Aorta (tissue), 5 donors: ENCODE measurements at regions of chr7 and their contacts with region 1.

Region 1: DNA sequence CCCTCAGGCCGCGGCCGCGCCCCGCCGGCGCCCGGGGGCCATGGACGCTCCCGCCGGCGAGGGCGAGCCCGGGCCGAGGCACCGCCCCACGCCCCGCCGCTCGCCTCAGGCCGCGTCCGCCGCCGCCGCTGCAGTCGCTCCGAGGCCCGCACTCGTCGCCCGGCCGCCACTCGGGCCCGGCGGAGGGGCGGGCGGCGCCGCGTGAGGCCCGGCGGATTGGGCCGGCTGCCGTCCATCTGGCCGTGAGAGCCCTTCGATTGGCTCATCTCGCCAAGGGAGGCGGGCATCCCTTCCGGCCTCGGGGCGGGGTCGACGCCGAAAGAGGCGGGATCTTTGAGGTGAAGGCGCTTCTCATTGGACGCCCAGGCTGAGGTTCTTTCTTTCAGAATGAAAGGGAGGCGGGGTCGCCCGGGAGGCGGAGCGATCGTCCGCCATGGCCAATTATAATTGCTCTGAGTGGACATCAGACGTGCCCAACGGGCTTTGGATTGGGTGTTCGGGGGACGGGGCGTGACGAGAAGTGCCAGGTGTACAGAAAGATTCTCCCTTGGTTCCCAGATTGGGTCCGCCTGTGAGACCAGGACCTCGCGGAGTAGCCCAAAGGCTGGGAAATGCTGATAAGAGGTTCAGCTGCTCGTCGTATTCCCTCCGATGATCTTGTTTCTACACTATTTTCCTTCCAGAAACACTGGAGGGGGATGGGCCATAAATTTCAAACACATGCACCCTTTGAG is at the start of gene GNA12:
- DNase-seq: peak; percentile 98 to 99
- ATAC-seq: peak; percentile 99
- H3K4me3 ChIP-seq: peak within 1 kb of the TSS; percentile 72 to 87
- H3K27ac ChIP-seq: no peak within 1 kb of the TSS
- H3K4me1 ChIP-seq: peaks cover 0 to 1% of the 10 kb centered on the region in 2 donors
- H3K27me3 ChIP-seq: no peaks in the 10 kb centered on the region
- total RNA-seq, gene GNA12: 53.0 to 56.6 TPM

Region 2: DNA sequence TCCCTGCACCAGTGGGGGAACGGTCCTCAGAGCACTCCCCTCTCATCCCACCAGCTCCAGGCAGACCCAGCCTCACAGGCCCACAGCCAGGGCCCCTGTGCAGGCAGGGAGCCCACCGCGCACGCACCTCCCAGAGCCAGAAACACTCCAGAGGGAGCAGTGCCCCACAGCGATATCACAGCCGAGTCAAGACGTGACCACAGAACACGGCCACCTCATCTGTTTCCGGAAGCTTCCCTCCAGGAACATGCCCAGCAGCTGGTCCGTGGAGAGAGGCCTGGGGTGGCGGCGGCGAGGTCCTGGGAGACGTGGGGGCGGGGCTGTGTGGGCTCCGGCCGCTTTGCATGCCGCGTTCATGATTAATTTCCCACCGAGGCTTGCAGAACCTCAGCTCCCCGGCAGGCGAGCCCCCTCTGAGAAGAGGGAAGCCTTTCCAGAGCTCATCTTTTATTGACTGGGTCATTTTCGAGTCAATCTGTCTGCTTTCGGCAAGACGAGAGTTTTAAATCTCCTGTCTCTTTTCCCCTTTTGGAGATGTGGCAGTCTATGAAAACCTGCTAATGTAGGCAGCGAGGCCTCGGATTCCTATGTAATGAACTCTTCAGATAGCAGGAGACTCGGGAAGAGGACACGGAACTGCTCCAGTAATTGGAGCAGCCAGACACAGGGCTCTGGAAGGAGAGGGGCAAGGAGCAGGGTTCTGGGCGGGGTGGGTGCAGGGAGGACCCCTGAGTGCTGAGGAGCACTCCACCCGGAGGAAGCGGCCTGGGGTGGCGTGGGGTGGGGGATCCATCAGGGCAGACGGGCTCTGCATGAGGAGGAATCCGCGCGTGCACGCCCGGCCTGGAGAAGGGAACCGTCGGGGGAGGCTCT is 931.5 kb before region 1 on chr7:
- intact Hi-C with region 1: no loop called
- DNase-seq: peak; percentile 69 to 88
- ATAC-seq: no peak
- H3K4me3 ChIP-seq: no peak overlapping the region
- H3K27ac ChIP-seq: no peak overlapping the region
- H3K4me1 ChIP-seq: no peaks in the 10 kb centered on the region
- H3K27me3 ChIP-seq: no peaks in the 10 kb centered on the region

Region 3: GRCh38 chr7:2555121-2556052 is 288.9 kb before region 1 on chr7 and contains the start of gene BRAT1:
- intact Hi-C with region 1: loop called in 1 of 2 experiments (anchors 10 kb)
- DNase-seq: peak; percentile 99
- ATAC-seq: peak; percentile 97
- H3K4me3 ChIP-seq: peak within 1 kb of the TSS; percentile 79 to 97
- H3K27ac ChIP-seq: peak within 1 kb of the TSS; percentile 47 to 83
- H3K4me1 ChIP-seq: no peaks in the 10 kb centered on the region
- H3K27me3 ChIP-seq: no peaks in the 10 kb centered on the region
- total RNA-seq, gene BRAT1: 14.8 to 24.3 TPM

Region 4: GRCh38 chr7:2760098-2760889 is 84.0 kb before region 1 on chr7:
- intact Hi-C with region 1: loop called in 1 of 2 experiments (anchors 2 kb)
- DNase-seq: peak; percentile 74 to 77
- ATAC-seq: peak; percentile 66
- H3K4me3 ChIP-seq: no peak overlapping the region
- H3K27ac ChIP-seq: peak overlapping the region in 1 of 2 donors; percentile 43
- H3K4me1 ChIP-seq: no peaks in the 10 kb centered on the region
- H3K27me3 ChIP-seq: no peaks in the 10 kb centered on the region

Region 5: DNA sequence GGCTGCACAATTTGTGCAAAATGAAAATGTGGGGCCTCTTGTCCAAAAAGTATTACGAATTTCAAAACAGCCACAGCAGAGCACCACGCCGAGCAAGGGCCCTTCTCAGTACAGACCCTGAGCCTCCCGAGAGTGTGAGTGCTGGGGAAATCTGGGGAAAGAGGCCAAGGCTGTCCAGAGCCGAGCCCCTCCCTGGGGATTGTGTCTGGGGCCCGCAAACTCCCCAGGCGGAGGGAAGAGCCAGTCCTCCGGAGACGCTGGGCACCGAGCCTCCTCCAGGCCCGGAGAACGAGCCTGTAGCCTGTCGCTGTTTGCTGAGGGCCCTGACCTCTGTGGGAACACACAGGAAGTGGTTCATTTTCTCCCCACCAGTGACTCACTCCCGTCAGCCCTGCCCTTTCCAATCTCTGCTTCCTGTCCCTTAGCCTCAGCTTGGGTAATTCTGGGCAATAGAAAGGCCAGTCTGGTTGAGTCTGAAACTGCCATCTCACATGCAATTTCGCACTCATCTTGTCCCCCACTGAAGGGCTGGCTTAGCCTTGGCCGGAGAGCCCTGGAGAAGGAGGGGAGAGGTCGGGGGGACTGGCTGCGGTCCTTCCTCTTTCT is 19.2 kb after region 1 on chr7:
- intact Hi-C with region 1: loop called in 1 of 2 experiments (anchors 1 kb)
- DNase-seq: peak; percentile 93 to 94
- ATAC-seq: peak; percentile 95
- H3K4me3 ChIP-seq: no peak overlapping the region
- H3K27ac ChIP-seq: peak overlapping the region; percentile 83 to 96
- H3K4me1 ChIP-seq: no peaks in the 10 kb centered on the region
- H3K27me3 ChIP-seq: no peaks in the 10 kb centered on the region